CD14-positive monocyte (primary cell): ENCODE measurements at regions of chr4 and their contacts with region 1.

Region 1: DNA sequence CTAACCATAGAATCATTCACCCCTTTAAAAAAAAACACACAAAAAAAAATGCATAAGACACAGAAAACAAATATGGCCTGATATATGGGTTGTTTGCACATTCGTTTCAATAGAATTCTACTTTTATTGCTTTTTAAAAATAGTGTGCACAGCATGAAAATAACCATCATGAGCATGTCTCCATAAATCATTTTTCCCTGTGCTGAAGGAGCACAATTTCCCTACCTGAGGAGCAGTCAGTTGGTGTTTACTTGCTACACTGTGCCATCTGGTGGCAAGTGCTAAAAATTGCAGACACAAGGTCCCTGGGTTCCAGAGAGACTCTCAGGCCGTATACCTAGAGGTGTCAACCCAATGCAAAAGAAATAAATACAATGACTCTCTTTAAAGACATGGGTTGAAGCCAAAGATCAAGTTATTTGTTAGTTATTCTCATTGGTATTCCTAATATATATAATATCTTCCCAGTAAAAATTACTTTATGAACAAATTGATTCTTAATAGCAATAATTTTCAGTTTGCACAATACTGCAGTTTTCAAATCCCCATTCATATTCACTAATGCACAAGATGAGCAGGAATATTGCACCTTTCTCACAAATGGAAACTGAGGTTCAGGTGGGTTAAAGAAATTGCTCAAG is 551.4 kb downstream of the IQCM start:
- DNase-seq: peak in 1 of 3 donors; percentile 6
- H3K4me3 ChIP-seq: no peak overlapping the region
- H3K4me3 Mint-ChIP-seq: no peak overlapping the region
- H3K27ac ChIP-seq: no peak overlapping the region
- H3K27ac Mint-ChIP-seq: no peak overlapping the region
- H3K4me1 ChIP-seq: no peaks in the 10 kb centered on the region
- H3K4me1 Mint-ChIP-seq: no peaks in the 10 kb centered on the region
- H3K27me3 ChIP-seq: no peaks in the 10 kb centered on the region
- H3K27me3 Mint-ChIP-seq: no peaks in the 10 kb centered on the region
- CTCF ChIP-seq: peak; percentile 45

Region 2: GRCh38 chr4:148056869-148057268 is 1207.3 kb before region 1 on chr4:
- intact Hi-C with region 1: loop called in 1 of 2 experiments (anchors 5 kb)
- DNase-seq: peak; percentile 92 to 98 (median 96)
- H3K4me3 ChIP-seq: no peak overlapping the region
- H3K4me3 Mint-ChIP-seq: peak overlapping the region in 1 of 2 donors; percentile 40
- H3K27ac ChIP-seq: no peak overlapping the region
- H3K27ac Mint-ChIP-seq: peak overlapping the region in 1 of 7 donors; percentile 36
- H3K4me1 ChIP-seq: peaks cover 24 to 32% of the 10 kb centered on the region in 2 donors
- H3K4me1 Mint-ChIP-seq: peaks cover 45% of the 10 kb centered on the region
- H3K27me3 ChIP-seq: no peaks in the 10 kb centered on the region
- H3K27me3 Mint-ChIP-seq: peaks cover 0 to 3% (median 3%) of the 10 kb centered on the region in 3 donors
- CTCF ChIP-seq: peak; percentile 75